ENCODE measurements at regions of chr9 and their contacts with region 1.

Region 1: GRCh38 chr9:69190086-69190862 is 16.2 kb downstream of the TJP2 start:
- DNase-seq: no peak
- H3K4me3 ChIP-seq: no peak overlapping the region
- H3K27ac ChIP-seq: no peak overlapping the region
- H3K4me1 ChIP-seq: peaks cover 38% of the 10 kb centered on the region
- H3K27me3 ChIP-seq: no peaks in the 10 kb centered on the region
- CTCF ChIP-seq: no peak
- POLR2A ChIP-seq: no peak

Region 2: DNA sequence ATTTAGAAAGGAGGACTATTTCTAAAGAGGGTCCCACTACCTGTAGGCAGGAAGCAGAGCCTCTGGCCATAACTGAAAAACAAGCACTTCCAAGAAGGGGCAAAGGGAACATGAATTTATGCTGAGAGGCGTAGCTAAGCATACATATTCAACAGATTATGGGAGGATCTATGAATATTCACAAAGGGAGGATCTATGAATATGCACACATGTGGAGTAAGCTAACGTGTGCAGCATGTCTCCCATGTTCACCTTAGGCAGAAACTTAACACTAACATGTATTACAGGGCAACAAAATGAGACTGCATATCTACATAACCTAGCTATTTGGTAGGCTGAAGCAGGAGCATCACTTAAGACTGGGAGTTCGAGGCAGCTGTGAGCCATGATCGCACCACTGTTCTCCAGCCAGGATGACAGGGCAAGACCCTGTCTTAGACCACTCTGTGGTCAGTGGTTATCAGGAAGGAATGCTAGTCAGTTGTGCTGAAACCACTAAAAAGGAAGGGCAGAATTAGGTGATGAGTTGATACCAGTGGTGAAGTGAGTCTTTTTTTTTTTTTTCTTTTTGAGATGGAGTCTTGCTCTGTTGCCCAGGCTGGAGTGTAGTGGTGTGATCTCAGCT is 134.0 kb before region 1 on chr9:
- intact Hi-C with region 1: loop called (anchors 5 kb)
- DNase-seq: no peak
- H3K4me3 ChIP-seq: no peak overlapping the region
- H3K27ac ChIP-seq: no peak overlapping the region
- H3K4me1 ChIP-seq: peaks cover 14% of the 10 kb centered on the region
- H3K27me3 ChIP-seq: no peaks in the 10 kb centered on the region
- CTCF ChIP-seq: no peak
- POLR2A ChIP-seq: no peak